CD8-positive, alpha-beta T cell (primary cell): ENCODE measurements at regions of chr5 and their contacts with region 1.

Region 1: GRCh38 chr5:180315762-180316212 is 23.9 kb upstream of the MAPK9 start:
- DNase-seq: peak; percentile 51 to 85 (median 76)
- ATAC-seq: peak; percentile 97
- H3K4me3 ChIP-seq: no peak overlapping the region
- H3K4me3 Mint-ChIP-seq: no peak overlapping the region
- H3K27ac ChIP-seq: no peak overlapping the region
- H3K27ac Mint-ChIP-seq: no peak overlapping the region
- H3K4me1 ChIP-seq: no peaks in the 10 kb centered on the region
- H3K4me1 Mint-ChIP-seq: no peaks in the 10 kb centered on the region
- H3K27me3 ChIP-seq: no peaks in the 10 kb centered on the region
- H3K27me3 Mint-ChIP-seq: peaks cover 4% of the 10 kb centered on the region
- CTCF ChIP-seq: peak; percentile 98

Region 2: GRCh38 chr5:179378441-179379271 is 937.1 kb before region 1 on chr5:
- CTCF ChIA-PET with region 1: no interaction called
- POLR2A ChIA-PET with region 1: no interaction called
- intact Hi-C with region 1: no loop called
- DNase-seq: peak in 1 of 9 experiments; percentile 35
- ATAC-seq: no peak
- H3K4me3 ChIP-seq: no peak overlapping the region
- H3K4me3 Mint-ChIP-seq: no peak overlapping the region
- H3K27ac ChIP-seq: no peak overlapping the region
- H3K27ac Mint-ChIP-seq: no peak overlapping the region
- H3K4me1 ChIP-seq: no peaks in the 10 kb centered on the region
- H3K4me1 Mint-ChIP-seq: no peaks in the 10 kb centered on the region
- H3K27me3 ChIP-seq: no peaks in the 10 kb centered on the region
- H3K27me3 Mint-ChIP-seq: no peaks in the 10 kb centered on the region
- CTCF ChIP-seq: no peak

Region 3: GRCh38 chr5:180126726-180127681 is 188.8 kb before region 1 on chr5:
- CTCF ChIA-PET with region 1: interaction called, 4 read pairs
- POLR2A ChIA-PET with region 1: no interaction called
- intact Hi-C with region 1: loop called in 1 of 2 experiments (anchors 1 kb)
- DNase-seq: peak in 5 of 9 experiments; percentile 28 to 56 (median 44)
- ATAC-seq: no peak
- H3K4me3 ChIP-seq: no peak overlapping the region
- H3K4me3 Mint-ChIP-seq: no peak overlapping the region
- H3K27ac ChIP-seq: no peak overlapping the region
- H3K27ac Mint-ChIP-seq: no peak overlapping the region
- H3K4me1 ChIP-seq: no peaks in the 10 kb centered on the region
- H3K4me1 Mint-ChIP-seq: no peaks in the 10 kb centered on the region
- H3K27me3 ChIP-seq: no peaks in the 10 kb centered on the region
- H3K27me3 Mint-ChIP-seq: peaks cover 14% of the 10 kb centered on the region
- CTCF ChIP-seq: peak; percentile 77

Region 4: DNA sequence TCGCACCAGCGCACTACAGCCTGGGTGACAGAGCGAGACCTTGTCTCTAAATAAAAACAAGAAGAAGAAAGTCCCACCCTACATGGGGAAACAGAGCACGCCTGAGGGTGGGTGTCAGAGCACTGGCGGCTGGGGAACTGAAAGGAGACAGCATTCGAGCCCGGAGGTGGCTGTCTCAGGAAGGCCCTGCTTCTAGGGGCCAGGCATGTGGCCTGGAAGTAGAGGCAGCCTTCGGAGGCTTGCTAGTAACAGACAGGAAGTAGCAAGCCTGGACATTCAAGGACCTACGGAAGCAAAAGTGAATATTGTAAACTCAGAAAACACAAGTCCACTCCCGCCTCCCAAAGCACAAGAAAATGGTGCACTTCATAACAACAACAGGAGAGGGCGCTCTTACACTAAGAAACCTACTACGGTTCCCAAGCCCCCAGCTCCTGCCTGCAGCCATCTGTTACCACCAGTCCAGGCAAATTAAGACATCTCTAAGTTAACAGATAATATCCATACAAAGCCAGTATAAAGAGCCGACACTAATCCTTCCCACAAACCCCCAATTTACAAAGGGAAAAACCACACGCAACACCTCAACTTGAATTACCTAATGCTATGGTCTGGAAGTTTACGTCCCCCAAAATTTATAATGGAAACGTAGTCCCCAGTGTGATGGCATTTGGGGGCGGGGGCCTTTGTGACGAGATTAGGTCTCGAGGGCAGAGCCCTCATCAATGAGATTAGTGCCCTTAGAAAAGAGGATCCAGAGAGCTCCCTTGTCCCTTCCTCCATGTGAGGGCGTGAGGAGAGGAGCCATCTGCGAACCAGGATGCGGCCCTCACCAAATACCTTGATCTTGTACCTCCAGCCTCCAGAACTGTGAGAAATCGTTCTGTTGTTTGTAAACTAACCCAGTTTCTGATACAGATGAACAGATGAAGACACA is 114.5 kb before region 1 on chr5:
- CTCF ChIA-PET with region 1: interaction called, 4 read pairs
- POLR2A ChIA-PET with region 1: no interaction called
- intact Hi-C with region 1: loop called (anchors 1 to 10 kb)
- DNase-seq: peak in 1 of 9 experiments; percentile 33
- ATAC-seq: no peak
- H3K4me3 ChIP-seq: no peak overlapping the region
- H3K4me3 Mint-ChIP-seq: no peak overlapping the region
- H3K27ac ChIP-seq: no peak overlapping the region
- H3K27ac Mint-ChIP-seq: no peak overlapping the region
- H3K4me1 ChIP-seq: no peaks in the 10 kb centered on the region
- H3K4me1 Mint-ChIP-seq: no peaks in the 10 kb centered on the region
- H3K27me3 ChIP-seq: peaks cover 0 to 6% of the 10 kb centered on the region in 2 experiments
- H3K27me3 Mint-ChIP-seq: peaks cover 36% of the 10 kb centered on the region
- CTCF ChIP-seq: no peak

Region 5: DNA sequence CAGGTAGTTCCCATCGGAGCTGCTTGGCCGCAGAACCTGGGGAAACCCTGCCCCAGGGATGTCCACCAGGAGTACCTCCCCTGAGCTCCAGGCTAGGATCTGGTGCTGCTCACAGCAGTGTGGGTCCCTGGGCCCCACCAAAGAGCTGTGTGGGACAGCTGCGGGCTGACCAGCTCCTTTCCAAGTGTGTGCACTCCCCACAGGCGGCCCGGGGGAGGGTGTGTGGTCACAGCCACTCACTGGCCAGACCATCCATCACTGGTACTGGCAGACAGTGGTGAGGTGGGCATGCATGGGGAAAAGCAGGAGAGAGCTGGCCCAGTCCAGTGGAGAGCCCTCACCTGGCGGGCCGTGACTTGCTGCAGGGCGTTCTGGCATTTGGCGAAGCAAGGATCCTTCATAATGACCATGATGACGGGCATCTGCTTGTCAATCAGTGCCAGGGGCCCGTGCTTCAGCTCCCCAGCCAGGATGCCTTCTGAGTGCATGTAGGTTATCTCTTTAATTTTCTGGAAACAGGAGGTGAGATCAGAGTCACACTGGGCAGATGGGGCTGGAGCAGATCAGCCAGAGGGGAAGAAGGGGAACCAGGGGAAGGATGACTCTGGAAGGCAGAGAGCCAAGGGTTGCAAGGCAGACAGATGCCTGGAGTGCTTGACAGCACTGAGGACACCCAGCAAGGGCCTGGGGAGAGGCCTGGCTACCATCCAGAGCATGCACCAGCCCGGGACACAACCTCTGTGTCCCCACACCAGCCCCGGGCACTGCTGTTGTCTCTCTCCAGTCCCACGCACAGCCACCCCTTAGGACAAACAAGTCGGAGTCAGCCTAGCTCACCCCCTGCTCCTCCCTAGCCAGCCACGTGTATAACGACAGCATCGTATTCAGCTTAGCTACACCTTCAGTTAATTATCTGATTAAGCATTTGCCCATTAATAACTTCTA is 11.1 kb before region 1 on chr5:
- CTCF ChIA-PET with region 1: interaction called, 41 read pairs
- POLR2A ChIA-PET with region 1: no interaction called
- intact Hi-C with region 1: no loop called
- DNase-seq: no peak
- ATAC-seq: no peak
- H3K4me3 ChIP-seq: no peak overlapping the region
- H3K4me3 Mint-ChIP-seq: no peak overlapping the region
- H3K27ac ChIP-seq: no peak overlapping the region
- H3K27ac Mint-ChIP-seq: no peak overlapping the region
- H3K4me1 ChIP-seq: no peaks in the 10 kb centered on the region
- H3K4me1 Mint-ChIP-seq: no peaks in the 10 kb centered on the region
- H3K27me3 ChIP-seq: no peaks in the 10 kb centered on the region
- H3K27me3 Mint-ChIP-seq: peaks cover 4% of the 10 kb centered on the region
- CTCF ChIP-seq: no peak

Region 6: GRCh38 chr5:180334751-180335613 is 19.2 kb after region 1 on chr5:
- CTCF ChIA-PET with region 1: interaction called, 11 read pairs
- POLR2A ChIA-PET with region 1: no interaction called
- intact Hi-C with region 1: no loop called
- DNase-seq: no peak
- ATAC-seq: no peak
- H3K4me3 ChIP-seq: no peak overlapping the region
- H3K4me3 Mint-ChIP-seq: no peak overlapping the region
- H3K27ac ChIP-seq: no peak overlapping the region
- H3K27ac Mint-ChIP-seq: no peak overlapping the region
- H3K4me1 ChIP-seq: no peaks in the 10 kb centered on the region
- H3K4me1 Mint-ChIP-seq: no peaks in the 10 kb centered on the region
- H3K27me3 ChIP-seq: no peaks in the 10 kb centered on the region
- H3K27me3 Mint-ChIP-seq: peaks cover 28% of the 10 kb centered on the region
- CTCF ChIP-seq: no peak

Region 7: DNA sequence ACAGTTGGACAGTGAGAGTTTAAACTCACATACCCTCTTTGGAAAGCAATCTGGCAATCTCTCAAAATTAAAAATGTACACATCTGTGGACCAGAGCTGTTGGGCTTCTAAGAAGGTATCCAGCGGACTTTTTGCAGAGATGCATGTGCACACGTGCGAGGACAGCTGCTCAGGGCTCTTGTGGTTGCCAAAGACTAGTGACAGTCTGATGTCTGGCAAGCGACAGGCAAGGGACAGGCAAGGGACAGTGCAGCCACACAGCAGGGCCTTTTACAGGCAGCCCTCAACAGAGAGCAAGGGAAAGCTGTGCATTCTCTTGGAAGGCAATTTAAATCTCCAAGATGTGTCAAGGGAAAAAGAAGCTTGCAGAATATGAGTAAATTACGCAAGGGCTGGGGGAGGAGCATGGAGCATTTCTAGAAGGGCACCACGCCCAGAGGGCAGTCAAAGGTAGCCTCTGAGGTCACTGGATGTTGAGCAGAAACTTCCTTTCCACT is 28.1 kb after region 1 on chr5:
- CTCF ChIA-PET with region 1: interaction called, 10 read pairs
- POLR2A ChIA-PET with region 1: no interaction called
- intact Hi-C with region 1: no loop called
- DNase-seq: no peak
- ATAC-seq: no peak
- H3K4me3 ChIP-seq: no peak overlapping the region
- H3K4me3 Mint-ChIP-seq: no peak overlapping the region
- H3K27ac ChIP-seq: no peak overlapping the region
- H3K27ac Mint-ChIP-seq: no peak overlapping the region
- H3K4me1 ChIP-seq: no peaks in the 10 kb centered on the region
- H3K4me1 Mint-ChIP-seq: no peaks in the 10 kb centered on the region
- H3K27me3 ChIP-seq: no peaks in the 10 kb centered on the region
- H3K27me3 Mint-ChIP-seq: peaks cover 8% of the 10 kb centered on the region
- CTCF ChIP-seq: no peak

Region 8: GRCh38 chr5:180353980-180354452 is 38.2 kb after region 1 on chr5:
- CTCF ChIA-PET with region 1: no interaction called
- POLR2A ChIA-PET with region 1: no interaction called
- intact Hi-C with region 1: no loop called
- DNase-seq: no peak
- ATAC-seq: no peak
- H3K4me3 ChIP-seq: peak overlapping the region; percentile 70 to 76
- H3K4me3 Mint-ChIP-seq: peak overlapping the region; percentile 74
- H3K27ac ChIP-seq: no peak overlapping the region
- H3K27ac Mint-ChIP-seq: no peak overlapping the region
- H3K4me1 ChIP-seq: peaks cover 11% of the 10 kb centered on the region
- H3K4me1 Mint-ChIP-seq: peaks cover 6% of the 10 kb centered on the region
- H3K27me3 ChIP-seq: peaks cover 19 to 27% of the 10 kb centered on the region in 2 experiments
- H3K27me3 Mint-ChIP-seq: peaks cover 40% of the 10 kb centered on the region
- CTCF ChIP-seq: no peak